ENCODE measurements at regions of chr4 and their contacts with region 1.

Region 1: GRCh38 chr4:173413036-173413435 is 14.1 kb upstream of the SCRG1 start:
- DNase-seq: no peak

Region 2: DNA sequence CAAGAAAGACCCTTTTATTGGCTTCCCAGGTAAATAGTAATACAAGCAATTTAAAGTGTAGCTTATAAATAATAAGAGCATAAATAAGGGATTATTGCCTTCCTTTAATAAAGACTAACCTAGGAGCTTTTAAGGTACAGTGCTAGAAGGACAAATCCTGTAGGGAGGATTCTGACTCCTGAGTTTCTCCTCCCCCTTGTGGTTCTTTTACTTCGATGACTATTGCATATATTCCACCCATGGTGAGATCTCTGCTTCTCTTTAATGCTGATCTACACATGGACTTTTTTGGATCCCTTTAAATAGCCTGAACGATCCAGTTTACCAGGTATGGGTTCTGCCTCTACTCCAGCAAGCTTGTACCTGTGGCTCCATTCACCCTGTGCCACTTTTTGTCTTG is 241.9 kb before region 1 on chr4:
- intact Hi-C with region 1: no loop called
- DNase-seq: no peak

Region 3: DNA sequence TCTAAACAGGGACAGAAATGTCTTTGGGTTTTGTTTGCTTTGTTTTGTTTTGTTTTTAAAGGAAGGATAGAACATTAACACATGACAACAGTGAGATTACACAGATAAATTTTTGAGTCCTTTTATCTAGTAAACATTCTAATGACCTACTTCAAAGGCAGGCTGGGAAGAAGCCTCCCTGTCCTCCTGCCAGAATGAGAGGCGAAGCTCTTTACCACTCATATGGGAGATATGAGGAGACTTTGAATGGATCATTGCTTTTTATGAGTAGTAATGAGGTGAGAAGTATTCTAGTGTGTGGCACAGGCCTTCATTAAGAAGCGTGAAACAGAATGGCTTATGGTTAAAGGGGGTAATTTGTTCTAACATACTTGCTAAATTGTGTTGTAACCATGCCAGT is 698.4 kb after region 1 on chr4:
- intact Hi-C with region 1: loop called in 1 of 2 experiments (anchors 5 kb)
- DNase-seq: no peak

Measured in posterior vena cava (tissue), 2 donors.